Activated naive CD4-positive, alpha-beta T cell treated with anti-CD3 and anti-CD28 coated beads for 36 hours (primary cell): ENCODE measurements at regions of chr3 and their contacts with region 1.

Region 1: DNA sequence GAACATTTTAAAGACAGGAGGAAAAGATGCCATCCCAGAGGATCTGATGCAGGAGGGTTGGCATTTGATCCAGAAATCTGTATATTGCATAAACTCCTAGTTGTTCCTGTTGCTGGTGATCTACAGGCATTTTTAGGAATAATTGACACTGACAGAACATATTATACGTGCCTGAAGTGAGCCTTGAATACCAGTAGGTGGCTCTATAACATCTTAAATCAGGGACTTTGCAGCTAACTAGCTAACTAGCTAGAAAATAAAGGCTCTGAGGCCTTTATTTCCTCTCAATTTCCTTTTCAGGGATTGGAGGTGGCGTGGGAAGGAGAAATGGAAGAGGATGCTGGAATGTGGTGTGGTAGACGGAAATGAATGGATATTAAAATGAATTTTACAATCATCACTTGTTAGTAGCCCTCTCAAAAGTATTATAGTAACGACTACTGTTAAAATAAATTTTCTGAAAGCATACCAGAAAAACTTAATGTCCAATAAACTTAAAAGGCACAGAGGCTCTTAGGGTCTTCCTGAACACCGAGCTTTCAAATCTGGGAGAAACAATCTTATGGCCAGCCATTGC is 73.9 kb upstream of the ZBED2 start:
- DNase-seq: no peak
- H3K4me3 Mint-ChIP-seq: no peak overlapping the region
- H3K27ac Mint-ChIP-seq: peak overlapping the region; percentile 76
- H3K4me1 Mint-ChIP-seq: peaks cover 87% of the 10 kb centered on the region
- H3K27me3 Mint-ChIP-seq: no peaks in the 10 kb centered on the region

Region 2: GRCh38 chr3:111577794-111578685 is 91.0 kb before region 1 on chr3:
- CTCF ChIA-PET with region 1: interaction called, 44 read pairs
- intact Hi-C with region 1: loop called (anchors 1 kb)
- DNase-seq: peak; percentile 38
- H3K4me3 Mint-ChIP-seq: peak overlapping the region; percentile 18
- H3K27ac Mint-ChIP-seq: peak overlapping the region; percentile 90
- H3K4me1 Mint-ChIP-seq: peaks cover 75% of the 10 kb centered on the region
- H3K27me3 Mint-ChIP-seq: no peaks in the 10 kb centered on the region

Region 3: DNA sequence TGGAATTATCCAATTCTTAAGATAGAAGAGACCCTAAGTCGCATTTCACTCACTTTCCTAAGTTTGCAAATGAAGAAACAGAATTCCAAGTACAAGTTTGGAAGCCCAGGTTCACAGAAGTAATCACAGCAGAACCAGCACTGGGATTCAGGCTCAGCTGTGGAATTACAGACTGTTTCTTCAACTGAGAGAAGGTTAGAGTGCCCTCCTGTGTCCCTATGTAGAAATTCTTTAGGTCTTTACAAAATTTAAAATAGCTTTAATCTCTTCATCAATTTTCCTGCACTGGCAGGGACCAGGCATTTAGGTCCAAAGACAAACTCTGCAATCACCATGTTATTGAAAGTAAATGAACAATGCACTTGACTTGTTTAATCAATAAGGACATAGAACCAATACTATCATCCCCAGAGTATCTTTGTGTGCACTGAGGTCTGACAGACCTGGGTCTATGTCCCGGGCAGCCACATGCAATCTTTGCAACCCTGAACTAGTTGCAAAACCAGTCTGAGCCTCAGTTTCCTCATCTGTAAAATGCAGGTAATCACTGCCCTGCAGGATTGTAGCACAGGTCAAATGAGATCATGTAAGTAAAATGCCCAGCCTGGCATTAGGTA is 22.4 kb after region 1 on chr3:
- CTCF ChIA-PET with region 1: interaction called, 16 read pairs
- intact Hi-C with region 1: loop called (anchors 1 kb)
- DNase-seq: no peak
- H3K4me3 Mint-ChIP-seq: no peak overlapping the region
- H3K27ac Mint-ChIP-seq: no peak overlapping the region
- H3K4me1 Mint-ChIP-seq: peaks cover 44% of the 10 kb centered on the region
- H3K27me3 Mint-ChIP-seq: no peaks in the 10 kb centered on the region

Region 4: GRCh38 chr3:111717601-111718000 is 48.6 kb after region 1 on chr3:
- CTCF ChIA-PET with region 1: interaction called, 80 read pairs
- intact Hi-C with region 1: loop called (anchors 1 kb)
- DNase-seq: peak; percentile 83
- H3K4me3 Mint-ChIP-seq: no peak overlapping the region
- H3K27ac Mint-ChIP-seq: no peak overlapping the region
- H3K4me1 Mint-ChIP-seq: no peaks in the 10 kb centered on the region
- H3K27me3 Mint-ChIP-seq: no peaks in the 10 kb centered on the region

Region 5: GRCh38 chr3:111967651-111968274 is 298.8 kb after region 1 on chr3:
- CTCF ChIA-PET with region 1: interaction called, 7 read pairs
- intact Hi-C with region 1: loop called (anchors 1 kb)
- DNase-seq: peak; percentile 93
- H3K4me3 Mint-ChIP-seq: no peak overlapping the region
- H3K27ac Mint-ChIP-seq: no peak overlapping the region
- H3K4me1 Mint-ChIP-seq: peaks cover 25% of the 10 kb centered on the region
- H3K27me3 Mint-ChIP-seq: no peaks in the 10 kb centered on the region

Region 6: DNA sequence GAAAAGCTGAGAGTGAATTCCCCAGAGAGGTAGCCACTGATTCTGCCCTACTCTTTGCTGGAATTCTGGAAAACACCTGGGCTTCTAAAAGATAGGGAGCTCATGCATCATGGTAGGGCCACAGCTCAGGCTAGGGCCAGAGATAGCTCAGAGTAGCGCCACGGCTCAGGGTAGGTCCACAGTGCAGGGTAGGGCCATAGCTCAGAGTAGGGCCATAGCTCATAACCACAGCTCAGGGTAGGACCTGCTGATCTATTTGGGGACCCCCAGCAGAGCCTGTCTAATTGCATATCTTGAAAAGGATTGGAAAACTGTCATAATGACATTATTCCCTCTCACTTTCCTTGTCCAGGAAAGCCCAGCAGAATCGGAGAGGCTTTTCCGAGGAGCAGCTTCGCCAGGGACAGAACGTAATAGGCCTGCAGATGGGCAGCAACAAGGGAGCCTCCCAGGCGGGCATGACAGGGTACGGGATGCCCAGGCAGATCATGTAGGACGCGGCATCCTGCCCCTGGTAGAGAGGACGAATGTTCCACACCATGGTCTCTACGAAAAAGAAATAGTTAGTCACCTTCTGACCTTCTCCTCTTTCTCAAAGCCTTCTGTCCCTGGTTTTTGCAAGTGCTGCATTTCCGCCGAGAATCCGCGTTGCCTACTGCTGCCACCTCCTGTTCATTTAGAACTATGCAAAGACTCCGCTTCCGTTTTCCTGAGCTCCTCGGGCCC is 344.2 kb after region 1 on chr3:
- CTCF ChIA-PET with region 1: interaction called, 45 read pairs
- intact Hi-C with region 1: loop called (anchors 1 kb)
- DNase-seq: peak; percentile 81
- H3K4me3 Mint-ChIP-seq: no peak overlapping the region
- H3K27ac Mint-ChIP-seq: no peak overlapping the region
- H3K4me1 Mint-ChIP-seq: peaks cover 17% of the 10 kb centered on the region
- H3K27me3 Mint-ChIP-seq: no peaks in the 10 kb centered on the region